HEK293 (cell line): ENCODE measurements at regions of chr11 and their contacts with region 1.

Region 1: DNA sequence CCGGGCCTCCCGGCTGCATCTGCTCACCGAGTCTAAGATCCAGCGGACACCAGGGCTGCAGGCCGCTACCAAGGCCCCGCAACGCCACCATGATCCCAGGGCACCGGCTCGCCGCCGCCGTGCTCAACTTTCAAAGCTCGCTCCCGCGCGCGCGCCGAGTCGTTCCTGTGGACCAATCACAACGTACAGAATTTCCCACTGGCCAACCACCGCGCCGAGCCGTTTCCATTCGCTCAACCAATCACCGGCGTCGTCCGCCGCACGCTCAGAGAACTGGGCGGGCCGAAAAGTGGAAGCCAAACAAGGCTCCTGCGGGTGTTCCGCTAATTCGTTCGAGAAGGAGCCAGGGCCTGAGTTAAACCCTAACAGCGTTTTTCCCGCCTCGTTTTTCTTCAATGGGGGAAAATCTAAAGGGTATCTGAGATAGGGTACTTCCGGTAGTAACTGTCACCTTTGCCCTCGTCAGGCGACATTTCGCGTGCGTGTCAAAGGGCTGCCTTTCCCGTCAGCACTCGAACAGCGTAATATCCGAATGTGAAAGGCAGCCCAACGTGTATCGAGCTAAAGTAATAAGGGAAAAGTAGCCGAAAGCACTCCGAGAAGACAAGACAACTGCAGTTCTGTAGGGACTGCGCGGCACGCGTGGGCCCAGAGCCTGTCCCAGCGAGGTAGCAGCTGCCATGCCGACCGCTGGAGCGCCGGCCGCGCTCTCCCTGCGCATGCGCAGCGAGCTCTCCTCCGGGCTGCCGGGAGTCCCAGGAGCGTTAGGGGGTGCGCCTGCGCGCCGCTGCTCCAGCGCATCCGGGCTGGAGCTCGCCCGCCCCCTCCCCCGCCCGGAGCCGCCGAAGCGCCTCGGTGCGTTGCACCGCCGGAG is at the starts of genes NCAPD3 and VPS26B:
- H3K4me3 ChIP-seq: peak within 1 kb of the TSS; percentile 83
- H3K27ac ChIP-seq: peak within 1 kb of the TSS; percentile 77
- H3K4me1 ChIP-seq: peaks cover 7% of the 10 kb centered on the region; the same call in 1 of the 2 replicates
- CTCF ChIP-seq: peak; percentile 8; the same call in 1 of the 2 replicates

Region 2: DNA sequence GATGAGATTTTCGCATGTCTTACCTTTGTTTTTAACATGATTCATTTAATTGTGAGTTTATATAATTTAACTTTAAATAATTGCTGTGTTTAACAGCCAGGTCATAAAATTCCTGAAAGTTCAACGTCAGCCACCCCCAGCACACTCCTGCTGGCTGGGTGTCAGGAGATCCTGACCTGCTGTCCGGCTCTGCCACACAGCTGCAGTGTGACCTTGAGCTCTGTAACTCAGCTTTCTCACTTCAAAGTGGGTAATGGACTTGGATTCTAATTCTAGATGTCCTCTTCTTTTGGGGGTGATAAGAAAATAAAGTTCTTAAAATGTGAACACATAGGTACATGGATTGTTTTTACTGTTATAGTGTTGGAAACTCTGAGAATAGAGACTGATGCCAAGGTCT is 11.3 kb after region 1 on chr11:
- CTCF ChIA-PET with region 1: interaction called, 8 read pairs
- POLR2A ChIA-PET with region 1: interaction called, 15 read pairs
- H3K4me3 ChIP-seq: no peak overlapping the region
- H3K27ac ChIP-seq: no peak overlapping the region
- H3K4me1 ChIP-seq: no peaks in the 10 kb centered on the region
- CTCF ChIP-seq: no peak

Region 3: GRCh38 chr11:134244655-134245054 is 20.6 kb after region 1 on chr11:
- CTCF ChIA-PET with region 1: interaction called, 8 read pairs
- POLR2A ChIA-PET with region 1: interaction called, 10 read pairs
- H3K4me3 ChIP-seq: no peak overlapping the region
- H3K27ac ChIP-seq: no peak overlapping the region
- H3K4me1 ChIP-seq: no peaks in the 10 kb centered on the region
- CTCF ChIP-seq: no peak

Region 4: DNA sequence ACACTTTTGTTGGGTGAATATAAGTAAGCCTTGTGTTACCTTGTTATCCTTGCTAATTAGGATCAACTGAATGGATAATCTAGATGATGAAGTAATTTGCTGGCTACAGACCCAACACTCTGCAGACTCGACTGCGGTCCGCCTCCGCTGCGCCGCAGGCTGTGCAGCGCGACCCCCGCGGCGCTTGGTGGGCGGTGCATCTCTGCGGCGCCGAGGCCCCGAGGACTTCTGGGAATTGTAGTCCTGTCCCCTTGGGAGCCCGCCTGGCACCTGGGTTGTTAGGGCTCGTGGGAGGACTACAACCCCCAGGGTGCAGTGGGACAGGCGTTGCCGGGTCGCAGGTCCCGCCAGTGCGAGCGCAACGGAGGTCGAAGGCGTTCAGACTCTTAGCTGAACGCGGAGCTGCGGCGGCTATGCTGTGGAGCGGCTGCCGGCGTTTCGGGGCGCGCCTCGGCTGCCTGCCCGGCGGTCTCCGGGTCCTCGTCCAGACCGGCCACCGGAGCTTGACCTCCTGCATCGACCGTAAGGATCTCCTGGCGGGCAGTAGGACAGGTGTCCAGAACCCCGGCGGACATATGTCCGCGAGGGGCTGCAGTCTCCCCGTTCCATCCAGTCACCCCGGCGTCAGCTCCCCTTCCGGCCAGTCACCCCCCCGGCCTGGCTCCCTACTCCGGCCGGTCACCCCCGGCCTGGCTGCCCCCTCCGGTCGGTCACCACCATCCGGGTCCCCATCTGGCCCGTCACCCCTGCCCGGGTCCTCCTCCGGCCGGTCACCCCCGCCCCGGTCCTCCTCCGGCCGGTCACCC is 29.3 kb after region 1 on chr11 and contains the starts of genes ACAD8 and THYN1:
- CTCF ChIA-PET with region 1: no interaction called
- POLR2A ChIA-PET with region 1: interaction called, 35 read pairs
- H3K4me3 ChIP-seq: peak within 1 kb of the TSS; percentile 79
- H3K27ac ChIP-seq: peak within 1 kb of the TSS; percentile 53; the same call in 1 of the 2 replicates
- H3K4me1 ChIP-seq: no peaks in the 10 kb centered on the region
- CTCF ChIP-seq: no peak; the same call in 1 of the 2 replicates

Region 5: GRCh38 chr11:134275534-134276395 is 51.7 kb after region 1 on chr11 and contains the start of gene GLB1L3:
- CTCF ChIA-PET with region 1: interaction called, 3 read pairs
- POLR2A ChIA-PET with region 1: interaction called, 27 read pairs
- H3K4me3 ChIP-seq: peak within 1 kb of the TSS; percentile 52
- H3K27ac ChIP-seq: peak within 1 kb of the TSS; percentile 69
- H3K4me1 ChIP-seq: peaks cover 7% of the 10 kb centered on the region
- CTCF ChIP-seq: peak; percentile 91